Calu3 (cell line): ENCODE measurements at regions of chr18 and their contacts with region 1.

Region 1: DNA sequence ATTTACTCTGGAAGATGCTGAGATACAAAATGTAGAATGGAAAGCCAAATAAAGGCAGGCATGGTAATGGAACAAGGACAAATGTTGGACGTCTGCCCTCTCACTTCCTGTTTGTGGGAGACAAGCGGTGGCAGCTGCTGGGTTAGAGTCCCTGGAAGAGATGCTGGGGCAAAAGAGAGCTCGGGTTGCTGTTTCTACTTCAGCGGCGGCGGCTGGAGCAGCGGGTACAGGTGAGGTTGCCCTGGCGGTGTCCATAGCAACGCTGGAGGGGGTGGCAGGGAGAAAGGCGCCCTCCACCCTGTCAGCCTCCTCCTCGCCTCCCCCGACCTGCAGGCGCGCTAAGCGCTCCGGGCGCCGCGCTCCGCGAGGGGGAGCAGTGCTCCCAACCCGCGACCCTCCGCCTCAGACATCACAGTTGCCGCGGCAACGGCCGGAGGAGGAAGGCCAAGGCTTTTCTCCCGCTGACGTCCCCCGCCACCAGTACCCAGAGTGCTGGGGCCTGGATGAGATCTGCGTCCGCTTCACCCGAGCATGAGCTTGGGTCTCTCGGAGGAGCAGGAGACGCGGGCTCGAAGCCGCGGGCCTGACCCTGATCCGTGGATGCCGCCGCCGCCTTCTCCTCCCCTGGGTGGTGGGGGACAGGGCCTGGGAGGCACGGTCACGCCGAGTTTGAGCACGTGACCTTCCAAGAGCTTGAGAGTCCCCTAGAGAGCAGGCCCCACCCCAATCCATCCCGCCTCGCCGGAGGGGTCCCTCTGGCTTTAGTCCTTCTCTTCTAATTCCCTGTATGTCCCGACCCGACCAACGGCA is 65.6 kb downstream of the NOL4 start:
- DNase-seq: no peak
- H3K4me3 Mint-ChIP-seq: no peak overlapping the region
- H3K27ac Mint-ChIP-seq: no peak overlapping the region
- H3K4me1 Mint-ChIP-seq: peaks cover 3% of the 10 kb centered on the region
- H3K27me3 Mint-ChIP-seq: no peaks in the 10 kb centered on the region
- CTCF ChIP-seq: no peak

Region 2: GRCh38 chr18:33350256-33350655 is 808.8 kb before region 1 on chr18:
- CTCF ChIA-PET with region 1: no interaction called
- intact Hi-C with region 1: loop called (anchors 10 kb)
- DNase-seq: no peak
- H3K4me3 Mint-ChIP-seq: no peak overlapping the region
- H3K27ac Mint-ChIP-seq: no peak overlapping the region
- H3K4me1 Mint-ChIP-seq: peaks cover 4% of the 10 kb centered on the region
- H3K27me3 Mint-ChIP-seq: no peaks in the 10 kb centered on the region
- CTCF ChIP-seq: no peak